GM10248 (cell line): ENCODE measurements at regions of chr2 and their contacts with region 1.

Region 1: GRCh38 chr2:71068218-71069035 is at the start of gene NAGK:
- DNase-seq: peak; percentile 96
- CTCF ChIP-seq: no peak

Region 2: DNA sequence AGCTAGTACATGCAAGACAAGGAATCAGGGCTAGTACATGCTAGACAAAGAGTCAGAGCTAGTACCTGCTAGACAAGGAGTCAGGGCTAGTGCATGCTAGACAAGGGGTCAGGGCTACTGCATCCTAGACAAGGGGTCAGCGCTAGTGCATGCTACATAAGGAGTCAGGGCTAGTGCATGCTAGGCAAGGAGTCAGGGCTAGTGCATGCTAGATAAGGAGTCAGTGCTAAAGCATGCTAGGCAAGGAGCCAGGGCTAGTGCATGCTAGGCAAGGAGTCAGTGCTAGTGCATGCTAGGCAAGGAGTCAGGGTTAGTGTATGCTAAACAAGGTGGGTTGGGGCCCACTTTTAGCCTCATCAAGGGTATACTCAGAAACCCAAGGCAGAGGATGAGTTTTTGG is 676.4 kb before region 1 on chr2:
- CTCF ChIA-PET with region 1: no interaction called
- POLR2A ChIA-PET with region 1: no interaction called
- DNase-seq: no peak
- CTCF ChIP-seq: no peak

Region 3: GRCh38 chr2:71000780-71001591 is 67.4 kb before region 1 on chr2:
- CTCF ChIA-PET with region 1: interaction called, 29 read pairs
- POLR2A ChIA-PET with region 1: no interaction called
- DNase-seq: peak; percentile 87
- CTCF ChIP-seq: peak; percentile 94

Region 4: GRCh38 chr2:71082402-71083252 is 14.2 kb after region 1 on chr2:
- CTCF ChIA-PET with region 1: interaction called, 27 read pairs
- POLR2A ChIA-PET with region 1: interaction called, 4 read pairs
- DNase-seq: no peak
- CTCF ChIP-seq: no peak

Region 5: DNA sequence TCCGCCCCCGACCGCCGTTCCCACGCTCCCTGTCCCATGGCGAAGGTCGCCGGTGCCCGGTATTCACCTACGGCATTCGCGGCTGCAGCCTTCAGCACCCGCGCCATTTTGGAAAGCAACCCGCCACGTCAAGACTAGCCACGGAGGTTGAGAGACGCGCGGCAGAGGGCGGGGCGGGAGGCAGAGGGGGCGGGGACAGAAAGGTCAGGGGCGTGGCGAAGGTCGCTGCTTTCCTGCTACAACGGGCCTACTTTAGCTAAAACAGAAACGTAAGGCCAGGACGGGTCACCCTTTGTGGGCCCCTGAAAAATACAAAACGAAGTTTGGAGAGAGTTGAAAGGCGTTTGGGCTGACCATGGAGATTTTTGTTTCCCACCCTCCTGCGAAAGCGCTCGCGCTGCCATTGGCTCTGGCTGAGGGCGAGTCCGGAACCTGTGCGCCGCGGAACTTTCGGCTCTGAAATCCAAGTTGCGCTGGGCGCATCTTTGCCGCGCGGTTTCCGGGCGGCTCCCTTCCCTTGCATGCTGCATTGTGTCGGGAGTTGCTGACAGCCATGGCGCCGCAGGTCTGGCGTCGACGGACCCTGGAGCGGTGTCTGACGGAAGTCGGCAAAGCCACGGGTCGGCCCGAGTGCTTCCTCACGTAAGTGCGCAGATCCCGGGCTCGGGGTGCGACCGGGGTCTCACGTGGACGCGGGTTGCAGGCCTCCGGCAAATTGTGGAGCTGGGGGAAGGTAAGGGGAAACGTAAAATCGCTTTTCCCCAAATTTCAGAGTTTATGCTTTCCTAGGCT is 61.9 kb after region 1 on chr2 and contains the starts of genes MCEE and MPHOSPH10:
- CTCF ChIA-PET with region 1: interaction called, 20 read pairs
- POLR2A ChIA-PET with region 1: interaction called, 9 read pairs
- DNase-seq: peak; percentile 93
- CTCF ChIP-seq: no peak

Region 6: DNA sequence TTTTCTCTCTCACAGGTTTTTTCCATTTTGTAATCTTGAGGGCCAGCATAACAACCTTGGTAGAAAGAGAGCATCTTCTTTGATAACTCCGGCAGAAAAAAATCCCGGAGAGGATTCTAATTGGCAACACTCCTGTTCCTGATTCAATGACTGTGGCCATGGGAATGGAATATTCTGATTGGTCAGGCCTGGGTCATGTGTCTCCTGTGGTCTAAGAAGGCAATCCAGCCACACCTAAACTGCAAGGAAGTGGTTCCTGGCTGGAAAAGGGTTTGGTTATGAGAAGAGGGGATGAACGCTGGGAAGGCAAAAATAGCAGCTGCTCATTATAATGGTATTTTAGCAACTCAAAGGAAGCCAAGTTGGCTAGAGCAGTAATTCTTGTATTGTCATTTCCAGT is 238.3 kb after region 1 on chr2:
- CTCF ChIA-PET with region 1: no interaction called
- POLR2A ChIA-PET with region 1: no interaction called
- DNase-seq: no peak
- CTCF ChIP-seq: no peak